Heart right ventricle (tissue), 16 donors: ENCODE measurements at regions of chr14 and their contacts with region 1.

Region 1: GRCh38 chr14:22319526-22320361 is 269.3 kb downstream of the DAD1 start:
- DNase-seq: peak in 1 of 2 donors; percentile 59
- ATAC-seq: peak in 5 of 8 donors; percentile 48 to 65 (median 56)
- H3K4me3 ChIP-seq: no peak overlapping the region
- H3K27ac ChIP-seq: no peak overlapping the region
- H3K4me1 ChIP-seq: peaks cover 0 to 7% (median 0%) of the 10 kb centered on the region in 9 donors
- H3K27me3 ChIP-seq: peaks cover 0 to 6% (median 0%) of the 10 kb centered on the region in 7 donors
- CTCF ChIP-seq: peak; percentile 28 to 78 (median 72)

Region 2: DNA sequence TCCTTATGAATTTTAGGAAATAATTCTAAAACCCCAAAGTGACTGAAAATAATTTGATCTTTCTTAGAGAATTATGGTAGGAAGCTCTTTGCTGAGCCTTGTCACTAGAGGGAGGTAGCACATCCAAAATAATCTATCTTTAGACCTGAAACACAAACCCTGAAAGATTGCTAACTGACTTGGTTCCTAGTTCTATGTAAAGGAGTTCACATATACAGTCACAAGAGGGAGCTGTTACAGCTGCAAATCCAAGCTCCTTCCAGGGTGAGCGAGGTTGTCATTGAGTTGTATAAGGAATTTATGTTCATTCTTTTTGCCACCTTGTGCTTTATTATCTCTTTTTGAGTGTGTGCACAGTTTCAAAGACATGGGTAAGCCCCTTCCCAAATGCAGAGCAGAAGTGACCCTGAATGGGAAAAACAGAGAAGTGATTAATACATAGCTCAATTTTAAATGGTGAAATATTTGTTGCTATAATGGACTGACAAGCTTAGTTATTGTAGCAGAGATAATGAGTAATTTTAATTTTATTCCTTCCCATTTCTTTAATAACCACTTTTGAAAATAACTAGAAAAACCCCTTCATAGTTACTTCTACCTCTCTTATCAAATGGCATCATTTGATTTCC is 118.7 kb before region 1 on chr14:
- intact Hi-C with region 1: no loop called
- DNase-seq: no peak
- ATAC-seq: peak in 2 of 8 donors; percentile 34 to 58
- H3K4me3 ChIP-seq: no peak overlapping the region
- H3K27ac ChIP-seq: no peak overlapping the region
- H3K4me1 ChIP-seq: no peaks in the 10 kb centered on the region
- H3K27me3 ChIP-seq: no peaks in the 10 kb centered on the region
- CTCF ChIP-seq: peak in 7 of 9 donors; percentile 54 to 66 (median 58)

Region 3: DNA sequence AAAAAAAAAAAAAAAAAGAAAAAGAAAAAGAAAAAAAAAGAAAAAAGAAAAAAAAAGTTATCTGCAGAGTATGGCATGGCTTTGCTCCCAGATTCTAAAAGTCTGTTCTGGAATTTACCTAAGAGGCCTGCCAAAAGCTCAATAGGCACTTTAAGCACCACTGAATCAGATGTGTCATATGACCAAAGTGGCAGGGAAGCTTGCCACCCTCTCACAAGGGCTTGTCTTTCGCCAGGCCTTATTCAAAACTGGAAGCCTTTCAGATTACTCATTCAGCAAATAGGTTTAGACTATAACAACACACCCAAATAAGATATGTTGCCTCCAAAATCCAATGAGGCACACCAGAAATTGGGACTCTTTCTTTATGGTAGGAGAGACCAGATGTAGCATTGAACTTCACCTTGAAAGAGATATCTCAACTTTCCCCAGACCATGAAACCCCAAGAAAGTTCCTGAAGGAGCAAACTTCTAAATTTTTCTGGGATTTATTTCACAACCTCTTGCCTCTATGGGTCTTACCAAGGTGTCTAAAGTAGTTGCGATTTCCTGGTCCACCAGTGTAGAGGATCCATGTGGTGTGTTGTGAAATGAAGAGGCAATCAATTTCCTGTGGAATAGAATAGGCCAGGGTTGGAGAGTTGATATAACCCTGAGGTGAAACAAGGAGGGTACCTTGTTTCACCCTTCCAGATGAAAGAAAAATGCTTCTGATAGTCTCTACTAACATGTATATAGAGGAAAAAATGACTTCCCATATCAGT is 50.5 kb after region 1 on chr14:
- intact Hi-C with region 1: loop called (anchors 2 to 5 kb)
- DNase-seq: peak in 1 of 2 donors; percentile 42
- ATAC-seq: peak; percentile 71 to 98 (median 93)
- H3K4me3 ChIP-seq: no peak overlapping the region
- H3K27ac ChIP-seq: peak overlapping the region in 5 of 10 donors; percentile 20 to 63 (median 35)
- H3K4me1 ChIP-seq: peaks cover 0 to 20% (median 4%) of the 10 kb centered on the region in 9 donors
- H3K27me3 ChIP-seq: no peaks in the 10 kb centered on the region
- CTCF ChIP-seq: no peak

Region 4: DNA sequence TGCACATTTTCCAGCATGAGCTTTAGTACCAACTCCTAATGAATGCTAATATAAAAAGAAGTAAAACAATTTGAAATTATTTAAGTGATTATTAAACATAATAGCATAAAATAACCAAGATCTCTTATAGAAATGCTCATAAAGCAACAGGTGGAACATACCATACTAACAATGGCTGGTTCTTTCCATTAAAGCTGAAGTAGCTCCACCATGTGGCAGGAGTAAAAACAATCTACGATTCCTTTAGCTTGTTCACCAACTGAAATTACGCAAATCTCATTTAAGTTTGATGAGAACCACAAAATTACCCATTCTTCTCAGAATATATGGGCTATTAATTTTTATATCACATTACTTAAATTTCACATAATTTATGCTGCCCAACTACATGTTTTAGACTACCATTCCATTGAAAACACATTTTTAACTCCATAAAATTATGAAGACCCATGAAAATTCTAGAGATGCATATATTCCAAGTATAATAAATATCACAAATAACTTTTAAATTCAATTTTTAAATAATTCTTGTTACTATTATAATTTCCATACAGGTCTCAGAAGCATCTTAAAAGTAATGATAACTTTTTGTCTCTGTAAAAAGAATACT is 55.7 kb after region 1 on chr14:
- intact Hi-C with region 1: loop called (anchors 2 to 5 kb)
- DNase-seq: no peak
- ATAC-seq: peak in 1 of 8 donors; percentile 42
- H3K4me3 ChIP-seq: no peak overlapping the region
- H3K27ac ChIP-seq: no peak overlapping the region
- H3K4me1 ChIP-seq: peaks cover 0 to 12% (median 1%) of the 10 kb centered on the region in 9 donors
- H3K27me3 ChIP-seq: peaks cover 0 to 10% (median 0%) of the 10 kb centered on the region in 7 donors
- CTCF ChIP-seq: peak; percentile 25 to 79 (median 63)

Region 5: DNA sequence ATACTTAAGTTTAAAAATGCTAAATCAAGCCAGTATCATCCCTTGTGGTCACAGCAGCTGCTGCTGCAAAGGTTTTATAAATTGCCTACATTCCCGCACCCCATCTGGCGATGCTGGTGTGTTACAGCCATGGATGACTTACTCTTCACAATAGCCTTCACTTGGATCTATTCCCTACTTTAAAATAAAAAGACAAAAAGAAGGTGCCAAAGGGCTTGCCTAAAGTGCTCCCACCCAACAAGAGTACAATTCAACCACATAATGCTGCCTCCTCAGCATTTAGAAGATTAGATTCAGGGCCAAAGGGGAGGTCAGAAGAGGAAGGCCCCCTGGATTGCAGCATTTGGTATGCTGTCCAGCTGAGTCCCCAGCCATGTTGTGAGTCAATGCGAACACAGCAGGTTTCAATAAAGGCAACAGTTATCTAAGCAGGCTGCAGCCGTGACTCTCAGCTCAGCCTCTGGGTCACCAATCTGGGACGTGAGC is 93.2 kb after region 1 on chr14:
- intact Hi-C with region 1: no loop called
- DNase-seq: no peak
- ATAC-seq: peak in 1 of 8 donors; percentile 52
- H3K4me3 ChIP-seq: no peak overlapping the region
- H3K27ac ChIP-seq: no peak overlapping the region
- H3K4me1 ChIP-seq: peaks cover 0 to 9% (median 0%) of the 10 kb centered on the region in 9 donors
- H3K27me3 ChIP-seq: peaks cover 0 to 6% (median 0%) of the 10 kb centered on the region in 7 donors
- CTCF ChIP-seq: no peak

Region 6: DNA sequence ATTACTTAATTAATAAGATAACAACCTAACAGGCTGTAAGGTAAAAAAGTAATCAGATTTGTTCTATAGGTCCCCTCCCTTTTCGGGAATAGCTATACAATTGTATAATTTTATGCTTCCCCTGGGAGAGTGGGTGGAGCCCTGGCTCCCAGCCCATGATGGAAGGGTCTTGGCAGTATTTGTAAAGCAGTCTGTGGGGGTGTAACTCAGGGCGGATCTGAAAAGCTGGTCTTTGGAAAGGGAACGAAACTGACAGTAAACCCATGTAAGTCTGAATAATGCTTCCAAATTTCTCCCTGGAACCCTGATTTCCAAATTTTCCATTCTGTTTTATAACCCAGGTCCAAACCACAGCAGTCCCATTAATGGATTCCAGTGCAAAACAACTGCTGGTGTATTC is 158.9 kb after region 1 on chr14:
- intact Hi-C with region 1: loop called in 1 of 10 experiments (anchors 5 kb)
- DNase-seq: peak; percentile 35 to 53
- ATAC-seq: peak in 6 of 8 donors; percentile 36 to 69 (median 48)
- H3K4me3 ChIP-seq: no peak overlapping the region
- H3K27ac ChIP-seq: peak overlapping the region in 3 of 10 donors; percentile 1 to 52 (median 10)
- H3K4me1 ChIP-seq: peaks cover 0 to 94% (median 55%) of the 10 kb centered on the region in 9 donors
- H3K27me3 ChIP-seq: no peaks in the 10 kb centered on the region
- CTCF ChIP-seq: no peak